ENCODE measurements at regions of chr19 and their contacts with region 1.

Region 1: GRCh38 chr19:1774999-1775772 is 21.9 kb downstream of the ONECUT3 start:
- DNase-seq: no peak
- ATAC-seq: peak; percentile 78
- H3K4me3 ChIP-seq: no peak overlapping the region
- H3K27ac ChIP-seq: no peak overlapping the region
- H3K4me1 ChIP-seq: peaks cover 24% of the 10 kb centered on the region
- H3K27me3 ChIP-seq: no peaks in the 10 kb centered on the region
- CTCF ChIP-seq: peak; percentile 92

Region 2: DNA sequence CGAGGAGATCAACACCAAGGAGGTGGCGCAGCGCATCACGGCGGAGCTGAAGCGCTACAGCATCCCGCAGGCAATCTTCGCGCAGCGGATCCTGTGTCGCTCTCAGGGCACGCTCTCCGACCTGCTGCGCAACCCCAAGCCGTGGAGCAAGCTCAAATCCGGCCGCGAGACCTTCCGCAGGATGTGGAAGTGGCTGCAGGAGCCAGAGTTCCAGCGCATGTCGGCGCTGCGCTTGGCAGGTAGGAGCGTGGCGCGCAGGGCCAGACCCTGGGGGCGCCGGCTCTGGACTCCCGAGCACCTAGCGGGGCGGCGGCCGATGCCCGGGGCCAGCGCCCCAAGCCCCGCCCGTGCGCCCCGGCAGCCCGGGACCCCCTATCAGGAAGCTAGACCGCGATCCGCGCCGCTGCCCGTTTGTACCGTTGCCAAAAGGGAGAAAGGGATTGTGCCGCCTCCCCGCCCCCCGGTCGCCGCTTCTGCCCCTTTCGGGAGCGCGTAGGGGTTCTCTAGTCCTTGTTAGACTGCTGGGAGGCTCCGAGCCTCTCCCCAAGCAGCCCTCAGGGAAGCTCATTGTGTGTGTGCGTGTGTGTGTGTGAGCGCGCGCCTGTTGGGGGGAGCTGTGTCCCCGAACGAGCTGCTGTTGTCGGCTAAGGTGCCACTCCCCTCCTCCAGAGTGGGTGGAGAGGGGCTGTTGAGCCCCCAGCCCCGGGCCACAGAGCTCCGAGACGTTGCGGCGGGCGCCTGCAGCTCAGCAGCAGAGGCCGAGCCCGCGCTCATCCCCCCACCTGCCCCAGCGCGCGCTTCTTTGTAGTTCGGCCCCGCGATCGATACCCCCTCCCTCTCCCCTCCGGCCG is 20.3 kb before region 1 on chr19:
- CTCF ChIA-PET with region 1: interaction called, 10 read pairs
- POLR2A ChIA-PET with region 1: interaction called, 5 read pairs
- in situ Hi-C with region 1: no loop called
- intact Hi-C with region 1: no loop called
- DNase-seq: no peak
- ATAC-seq: peak; percentile 18
- H3K4me3 ChIP-seq: peak overlapping the region; percentile 64 to 75
- H3K27ac ChIP-seq: peak overlapping the region; percentile 88
- H3K4me1 ChIP-seq: peaks cover 41% of the 10 kb centered on the region
- H3K27me3 ChIP-seq: no peaks in the 10 kb centered on the region
- CTCF ChIP-seq: no peak

Region 3: DNA sequence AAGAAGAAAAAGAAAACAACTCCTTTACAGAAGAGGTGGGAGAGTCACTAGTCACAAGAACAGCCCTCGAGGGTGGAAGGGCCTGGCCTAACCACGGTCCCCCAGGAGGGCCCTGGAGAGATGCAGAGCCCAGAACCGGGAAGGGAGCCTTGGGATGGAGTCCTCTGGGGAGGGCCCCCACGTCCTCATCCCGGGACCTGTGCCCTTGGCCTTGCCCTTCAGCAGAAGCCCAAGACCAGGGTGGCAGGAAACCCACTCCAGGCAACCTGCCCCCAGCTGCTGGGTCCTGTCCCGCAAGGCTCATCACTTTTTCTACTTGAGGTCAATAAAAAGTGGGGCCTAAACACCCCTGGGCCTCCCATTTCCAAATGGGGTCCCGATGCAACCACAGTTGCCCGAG is 39.2 kb after region 1 on chr19:
- CTCF ChIA-PET with region 1: no interaction called
- POLR2A ChIA-PET with region 1: interaction called, 14 read pairs
- in situ Hi-C with region 1: no loop called
- intact Hi-C with region 1: no loop called
- DNase-seq: no peak
- ATAC-seq: no peak
- H3K4me3 ChIP-seq: no peak overlapping the region
- H3K27ac ChIP-seq: no peak overlapping the region
- H3K4me1 ChIP-seq: peaks cover 16% of the 10 kb centered on the region; the same call in 1 of the 2 replicates
- H3K27me3 ChIP-seq: no peaks in the 10 kb centered on the region
- CTCF ChIP-seq: no peak

Measured in Panc1 (cell line).